ENCODE measurements at regions of chr11 and their contacts with region 1.

Region 1: GRCh38 chr11:32173977-32174376 is 83.1 kb downstream of the RCN1 start:
- DNase-seq: no peak
- H3K4me3 ChIP-seq: no peak overlapping the region
- H3K27ac ChIP-seq: no peak overlapping the region
- H3K4me1 ChIP-seq: peaks cover 5 to 15% (median 7%) of the 10 kb centered on the region in 4 donors
- H3K27me3 ChIP-seq: peaks cover 0 to 15% (median 0%) of the 10 kb centered on the region in 3 donors
- CTCF ChIP-seq: no peak
- EP300 ChIP-seq: no peak
- POLR2A ChIP-seq: no peak

Region 2: GRCh38 chr11:32050264-32050663 is 123.7 kb before region 1 on chr11:
- intact Hi-C with region 1: loop called (anchors 2 kb)
- DNase-seq: peak in 1 of 2 donors; percentile 41
- H3K4me3 ChIP-seq: no peak overlapping the region
- H3K27ac ChIP-seq: no peak overlapping the region
- H3K4me1 ChIP-seq: no peaks in the 10 kb centered on the region
- H3K27me3 ChIP-seq: peaks cover 0 to 34% (median 0%) of the 10 kb centered on the region in 3 donors
- CTCF ChIP-seq: no peak
- EP300 ChIP-seq: no peak
- POLR2A ChIP-seq: no peak

Region 3: GRCh38 chr11:32198053-32198452 is 24.1 kb after region 1 on chr11:
- intact Hi-C with region 1: no loop called
- DNase-seq: no peak
- H3K4me3 ChIP-seq: no peak overlapping the region
- H3K27ac ChIP-seq: no peak overlapping the region
- H3K4me1 ChIP-seq: no peaks in the 10 kb centered on the region
- H3K27me3 ChIP-seq: peaks cover 0 to 10% (median 0%) of the 10 kb centered on the region in 3 donors
- CTCF ChIP-seq: no peak
- EP300 ChIP-seq: no peak
- POLR2A ChIP-seq: no peak